Aorta (tissue), 5 donors: ENCODE measurements at regions of chr11 and their contacts with region 1.

Region 1: GRCh38 chr11:33899383-33900037 is 7.6 kb upstream of the LMO2 start:
- DNase-seq: peak; percentile 90
- ATAC-seq: peak; percentile 92
- H3K4me3 ChIP-seq: no peak overlapping the region
- H3K27ac ChIP-seq: no peak overlapping the region
- H3K4me1 ChIP-seq: no peaks in the 10 kb centered on the region
- H3K27me3 ChIP-seq: no peaks in the 10 kb centered on the region

Region 2: GRCh38 chr11:33930317-33931021 is 31.0 kb after region 1 on chr11:
- intact Hi-C with region 1: loop called in 1 of 2 experiments (anchors 5 kb)
- DNase-seq: peak in 1 of 2 donors; percentile 59
- ATAC-seq: peak; percentile 91
- H3K4me3 ChIP-seq: no peak overlapping the region
- H3K27ac ChIP-seq: peak overlapping the region in 1 of 2 donors; percentile 41
- H3K4me1 ChIP-seq: peaks cover 0 to 6% of the 10 kb centered on the region in 2 donors
- H3K27me3 ChIP-seq: no peaks in the 10 kb centered on the region

Region 3: DNA sequence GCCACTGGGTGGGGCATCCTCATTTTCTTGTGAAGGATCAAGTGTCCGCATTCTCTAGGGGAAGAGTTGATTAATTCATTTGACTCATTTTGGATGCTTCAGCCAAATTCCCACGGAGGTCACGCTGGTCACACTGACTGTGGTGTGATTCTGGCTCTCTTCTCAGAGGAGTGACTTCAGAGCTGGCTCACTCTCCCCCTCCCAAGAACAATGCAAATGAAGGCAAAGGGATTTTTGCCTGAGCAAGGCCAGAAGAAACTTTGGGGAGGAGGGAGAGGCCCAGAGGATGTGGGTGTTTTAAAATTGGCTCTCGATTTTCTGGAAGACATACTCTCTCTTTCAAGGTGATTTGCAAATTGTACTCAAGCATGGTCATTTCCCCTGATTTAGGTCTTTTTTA is 43.4 kb after region 1 on chr11:
- intact Hi-C with region 1: loop called in 1 of 2 experiments (anchors 5 kb)
- DNase-seq: peak; percentile 79 to 80
- ATAC-seq: peak; percentile 69
- H3K4me3 ChIP-seq: no peak overlapping the region
- H3K27ac ChIP-seq: peak overlapping the region in 1 of 2 donors; percentile 50
- H3K4me1 ChIP-seq: peaks cover 0 to 7% of the 10 kb centered on the region in 2 donors
- H3K27me3 ChIP-seq: no peaks in the 10 kb centered on the region